ENCODE measurements at regions of chr18 and their contacts with region 1.

Region 1: GRCh38 chr18:13813271-13813849 is 10.6 kb upstream of the MC5R start:
- DNase-seq: peak; percentile 16 to 70 (median 46)
- ATAC-seq: peak; percentile 61
- H3K4me3 ChIP-seq: no peak overlapping the region
- H3K4me3 Mint-ChIP-seq: no peak overlapping the region
- H3K27ac ChIP-seq: no peak overlapping the region
- H3K27ac Mint-ChIP-seq: no peak overlapping the region
- H3K4me1 ChIP-seq: no peaks in the 10 kb centered on the region
- H3K4me1 Mint-ChIP-seq: no peaks in the 10 kb centered on the region
- H3K27me3 ChIP-seq: no peaks in the 10 kb centered on the region
- H3K27me3 Mint-ChIP-seq: no peaks in the 10 kb centered on the region
- CTCF ChIP-seq: peak; percentile 90

Region 2: GRCh38 chr18:13775058-13775457 is 38.3 kb before region 1 on chr18:
- CTCF ChIA-PET with region 1: no interaction called
- POLR2A ChIA-PET with region 1: no interaction called
- intact Hi-C with region 1: no loop called
- DNase-seq: no peak
- ATAC-seq: no peak
- H3K4me3 ChIP-seq: no peak overlapping the region
- H3K4me3 Mint-ChIP-seq: no peak overlapping the region
- H3K27ac ChIP-seq: no peak overlapping the region
- H3K27ac Mint-ChIP-seq: no peak overlapping the region
- H3K4me1 ChIP-seq: no peaks in the 10 kb centered on the region
- H3K4me1 Mint-ChIP-seq: no peaks in the 10 kb centered on the region
- H3K27me3 ChIP-seq: no peaks in the 10 kb centered on the region
- H3K27me3 Mint-ChIP-seq: peaks cover 9% of the 10 kb centered on the region
- CTCF ChIP-seq: no peak

Region 3: DNA sequence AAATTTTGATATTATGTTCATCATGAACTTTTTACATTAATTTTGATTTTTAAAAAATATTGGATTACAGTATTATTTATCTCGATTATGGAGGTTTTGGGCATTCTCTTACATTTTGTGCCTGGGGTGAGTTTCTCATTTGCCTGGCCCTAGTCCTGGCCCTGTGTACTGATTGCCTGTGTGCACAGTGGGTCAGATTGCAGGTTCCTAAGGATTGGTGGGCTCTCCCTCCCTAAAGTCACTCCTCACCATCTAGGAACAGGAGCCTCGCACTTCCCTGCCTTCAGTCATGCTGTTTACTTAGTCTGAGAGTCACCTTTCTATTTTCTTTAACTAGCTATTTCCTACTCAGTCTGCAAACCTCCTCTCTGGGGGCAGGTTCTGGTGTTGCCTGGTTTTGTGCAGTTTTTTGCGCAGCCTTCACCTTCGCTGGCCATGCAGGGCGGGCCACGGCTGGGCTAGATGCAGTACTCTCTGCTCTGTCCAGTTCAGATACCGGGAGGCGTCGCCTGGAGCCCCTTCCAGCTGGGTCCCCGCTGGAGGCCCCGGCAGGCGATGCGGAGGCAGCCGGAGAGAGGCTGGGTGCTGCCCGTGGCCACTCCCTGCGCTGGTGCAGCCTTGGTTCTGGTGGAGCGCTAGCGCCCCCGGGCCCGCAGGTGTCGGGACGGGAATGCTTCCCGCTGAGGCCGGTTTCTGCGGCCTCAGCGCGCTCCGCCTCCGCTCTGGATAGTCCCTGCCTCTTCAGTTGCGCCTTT is 12.7 kb before region 1 on chr18:
- CTCF ChIA-PET with region 1: interaction called, 17 read pairs
- POLR2A ChIA-PET with region 1: interaction called, 3 read pairs
- intact Hi-C with region 1: no loop called
- DNase-seq: peak; percentile 14 to 60 (median 35)
- ATAC-seq: peak; percentile 62
- H3K4me3 ChIP-seq: no peak overlapping the region
- H3K4me3 Mint-ChIP-seq: peak overlapping the region; percentile 44
- H3K27ac ChIP-seq: no peak overlapping the region
- H3K27ac Mint-ChIP-seq: no peak overlapping the region
- H3K4me1 ChIP-seq: peaks cover 8% of the 10 kb centered on the region
- H3K4me1 Mint-ChIP-seq: peaks cover 6% of the 10 kb centered on the region
- H3K27me3 ChIP-seq: peaks cover 37 to 52% of the 10 kb centered on the region in 2 experiments
- H3K27me3 Mint-ChIP-seq: peaks cover 80% of the 10 kb centered on the region
- CTCF ChIP-seq: peak; percentile 38